ENCODE measurements at regions of chr9 and their contacts with region 1.

Region 1: DNA sequence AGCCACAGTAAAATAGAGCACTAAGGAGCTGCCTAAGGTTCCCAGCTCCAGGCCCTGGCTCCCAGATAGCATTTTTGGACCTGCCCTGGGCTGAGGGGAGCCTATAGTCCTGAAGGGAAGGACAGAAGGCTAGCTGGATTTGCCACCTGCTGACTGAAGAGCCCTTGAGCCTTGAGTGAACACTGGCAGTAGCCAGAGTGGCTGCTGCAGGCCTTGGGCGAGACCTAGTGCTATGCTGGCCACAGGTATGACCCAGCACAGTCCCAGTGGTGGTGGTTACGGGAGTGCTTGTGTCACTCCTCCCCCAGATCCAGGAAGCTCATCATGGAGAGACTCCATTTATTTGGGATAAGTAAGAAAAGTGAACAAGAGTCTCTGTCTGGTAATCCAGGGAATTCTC is 10.3 kb upstream of the STX17 start:
- DNase-seq: no peak
- ATAC-seq: no peak
- H3K4me3 ChIP-seq: no peak overlapping the region
- H3K27ac ChIP-seq: no peak overlapping the region
- H3K4me1 ChIP-seq: no peaks in the 10 kb centered on the region
- H3K27me3 ChIP-seq: no peaks in the 10 kb centered on the region
- CTCF ChIP-seq: no peak
- POLR2A ChIP-seq: no peak
- RAD21 ChIP-seq: no peak

Region 2: GRCh38 chr9:99019790-99020331 is 876.3 kb before region 1 on chr9:
- CTCF ChIA-PET with region 1: no interaction called
- POLR2A ChIA-PET with region 1: no interaction called
- RAD21 ChIA-PET with region 1: no interaction called
- intact Hi-C with region 1: loop called (anchors 10 kb)
- DNase-seq: no peak
- ATAC-seq: no peak
- H3K4me3 ChIP-seq: no peak overlapping the region
- H3K27ac ChIP-seq: no peak overlapping the region
- H3K4me1 ChIP-seq: peaks cover 0 to 12% of the 10 kb centered on the region in 2 experiments; a peak in 1 of 4 replicates
- H3K27me3 ChIP-seq: no peaks in the 10 kb centered on the region
- CTCF ChIP-seq: no peak
- POLR2A ChIP-seq: no peak
- RAD21 ChIP-seq: no peak

Measured in HCT116 (cell line).